ENCODE measurements at regions of chr2 and their contacts with region 1.

Region 1: DNA sequence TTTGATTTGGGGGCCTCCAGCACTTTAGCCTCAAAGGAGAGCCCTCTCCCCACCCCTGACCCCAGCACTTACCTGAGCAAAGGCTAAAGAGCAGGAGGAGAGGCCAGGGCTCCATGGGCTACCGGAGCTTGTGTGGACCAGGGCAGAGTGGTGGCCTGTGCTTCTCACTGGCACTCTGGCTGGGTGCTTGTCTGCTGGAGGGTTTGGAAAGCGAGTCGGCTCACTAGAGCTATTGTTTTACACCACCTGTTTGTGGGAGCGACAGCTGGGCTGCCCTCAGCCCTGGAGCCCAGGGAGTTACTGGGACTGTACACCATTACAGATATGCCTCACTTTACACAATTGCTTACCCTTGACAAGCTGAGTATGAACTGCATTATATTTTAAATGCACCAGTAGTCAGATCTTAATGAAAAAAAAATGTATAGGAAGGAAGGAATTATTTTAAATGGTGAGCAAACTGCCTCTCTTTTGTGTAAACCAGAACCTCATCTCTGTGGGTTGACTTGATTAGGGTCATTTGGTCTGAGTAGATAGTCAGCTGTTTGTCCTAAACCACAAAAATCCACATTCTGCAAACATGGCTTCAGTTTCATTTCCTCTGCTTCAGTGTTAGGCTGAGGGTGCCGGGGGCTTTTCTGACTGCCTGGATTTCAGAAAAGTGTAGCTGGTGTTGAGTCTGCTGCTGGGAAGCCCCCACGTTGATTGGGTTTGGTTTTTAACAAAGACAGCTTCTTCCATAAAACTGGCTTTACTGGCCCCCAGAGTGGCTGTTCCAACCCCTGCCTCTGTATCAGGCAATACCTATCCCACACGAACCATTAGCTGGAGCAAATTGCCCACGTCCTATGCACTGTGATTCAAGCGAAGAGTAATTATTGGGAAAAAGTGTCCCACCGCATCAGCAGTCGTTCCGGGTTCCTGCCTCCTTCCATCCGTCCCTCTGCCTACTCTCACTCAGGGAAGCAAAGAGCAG is at the start of gene CHRNA1:
- DNase-seq: no peak
- H3K4me3 ChIP-seq: no peak within 1 kb of the TSS
- H3K27ac ChIP-seq: no peak within 1 kb of the TSS
- H3K4me1 ChIP-seq: no peaks in the 10 kb centered on the region
- H3K27me3 ChIP-seq: no peaks in the 10 kb centered on the region
- CTCF ChIP-seq: no peak
- POLR2A ChIP-seq: no peak
- total RNA-seq, gene CHRNA1: 0.25 to 1.2 TPM

Region 2: GRCh38 chr2:174868878-174869277 is 104.3 kb after region 1 on chr2:
- intact Hi-C with region 1: no loop called
- DNase-seq: no peak
- H3K4me3 ChIP-seq: no peak overlapping the region
- H3K27ac ChIP-seq: no peak overlapping the region
- H3K4me1 ChIP-seq: no peaks in the 10 kb centered on the region
- H3K27me3 ChIP-seq: no peaks in the 10 kb centered on the region
- CTCF ChIP-seq: no peak
- POLR2A ChIP-seq: no peak

Region 3: GRCh38 chr2:174985630-174986029 is 221.1 kb after region 1 on chr2:
- intact Hi-C with region 1: loop called (anchors 5 kb)
- DNase-seq: no peak
- H3K4me3 ChIP-seq: no peak overlapping the region
- H3K27ac ChIP-seq: no peak overlapping the region
- H3K4me1 ChIP-seq: no peaks in the 10 kb centered on the region
- H3K27me3 ChIP-seq: no peaks in the 10 kb centered on the region
- CTCF ChIP-seq: peak; percentile 17 to 52 (median 43)
- POLR2A ChIP-seq: no peak

Region 4: GRCh38 chr2:175048275-175048674 is 283.7 kb after region 1 on chr2:
- intact Hi-C with region 1: no loop called
- DNase-seq: no peak
- H3K4me3 ChIP-seq: no peak overlapping the region
- H3K27ac ChIP-seq: no peak overlapping the region
- H3K4me1 ChIP-seq: no peaks in the 10 kb centered on the region
- H3K27me3 ChIP-seq: no peaks in the 10 kb centered on the region
- CTCF ChIP-seq: no peak
- POLR2A ChIP-seq: no peak

Measured in testis (tissue), 5 donors.